Gastrocnemius medialis (tissue), 4 donors: ENCODE measurements at regions of chr1 and their contacts with region 1.

Region 1: DNA sequence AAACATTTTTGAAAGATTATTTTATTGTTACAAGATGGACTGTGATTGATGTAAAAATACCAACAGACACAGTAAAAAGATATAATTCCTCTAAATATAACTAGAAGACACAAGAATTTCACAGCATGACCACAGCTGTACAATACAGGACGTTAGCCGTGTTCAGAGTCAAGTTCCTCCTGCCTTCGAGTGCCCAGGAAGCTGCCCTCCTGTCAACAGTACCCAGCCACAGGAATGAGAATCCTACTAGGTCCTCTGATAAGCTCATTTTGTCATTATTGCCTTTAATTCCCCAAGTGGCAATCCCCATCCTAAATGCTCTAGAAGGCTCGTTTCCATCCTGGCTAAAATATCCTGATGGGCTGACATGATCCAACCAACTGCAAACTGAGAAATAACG is 16.4 kb upstream of the CAPN2 start:
- DNase-seq: no peak
- ATAC-seq: no peak
- H3K4me3 ChIP-seq: no peak overlapping the region
- H3K27ac ChIP-seq: no peak overlapping the region
- H3K4me1 ChIP-seq: no peaks in the 10 kb centered on the region
- H3K27me3 ChIP-seq: no peaks in the 10 kb centered on the region
- CTCF ChIP-seq: no peak
- POLR2A ChIP-seq: no peak

Region 2: GRCh38 chr1:223401873-223402789 is 293.8 kb before region 1 on chr1:
- in situ Hi-C with region 1: no loop called
- intact Hi-C with region 1: no loop called
- DNase-seq: no peak
- ATAC-seq: no peak
- H3K4me3 ChIP-seq: no peak overlapping the region
- H3K27ac ChIP-seq: no peak overlapping the region
- H3K4me1 ChIP-seq: no peaks in the 10 kb centered on the region
- H3K27me3 ChIP-seq: no peaks in the 10 kb centered on the region
- CTCF ChIP-seq: no peak
- POLR2A ChIP-seq: no peak

Region 3: GRCh38 chr1:223639331-223639749 is 56.6 kb before region 1 on chr1:
- in situ Hi-C with region 1: no loop called
- intact Hi-C with region 1: no loop called
- DNase-seq: no peak
- ATAC-seq: no peak
- H3K4me3 ChIP-seq: no peak overlapping the region
- H3K27ac ChIP-seq: no peak overlapping the region
- H3K4me1 ChIP-seq: no peaks in the 10 kb centered on the region
- H3K27me3 ChIP-seq: no peaks in the 10 kb centered on the region
- CTCF ChIP-seq: no peak
- POLR2A ChIP-seq: no peak

Region 4: GRCh38 chr1:223755992-223756775 is 60.2 kb after region 1 on chr1:
- in situ Hi-C with region 1: loop called (anchors 5 to 10 kb)
- intact Hi-C with region 1: no loop called
- DNase-seq: no peak
- ATAC-seq: no peak
- H3K4me3 ChIP-seq: no peak overlapping the region
- H3K27ac ChIP-seq: no peak overlapping the region
- H3K4me1 ChIP-seq: no peaks in the 10 kb centered on the region
- H3K27me3 ChIP-seq: no peaks in the 10 kb centered on the region
- CTCF ChIP-seq: no peak
- POLR2A ChIP-seq: no peak

Region 5: GRCh38 chr1:223794136-223794880 is 98.4 kb after region 1 on chr1:
- in situ Hi-C with region 1: no loop called
- intact Hi-C with region 1: no loop called
- DNase-seq: no peak
- ATAC-seq: no peak
- H3K4me3 ChIP-seq: no peak overlapping the region
- H3K27ac ChIP-seq: no peak overlapping the region
- H3K4me1 ChIP-seq: no peaks in the 10 kb centered on the region
- H3K27me3 ChIP-seq: no peaks in the 10 kb centered on the region
- CTCF ChIP-seq: no peak
- POLR2A ChIP-seq: no peak